ENCODE measurements at regions of chr10 and their contacts with region 1.

Region 1: GRCh38 chr10:22228943-22229801 is 11.4 kb upstream of the EBLN1 start:
- DNase-seq: peak; percentile 71 to 77
- ATAC-seq: peak; percentile 91 to 92
- H3K4me3 ChIP-seq: peak overlapping the region; percentile 72 to 92 (median 82)
- H3K27ac ChIP-seq: peak overlapping the region; percentile 83 to 95 (median 90)
- H3K4me1 ChIP-seq: peaks cover 3 to 7% of the 10 kb centered on the region in 2 donors
- H3K27me3 ChIP-seq: no peaks in the 10 kb centered on the region
- CTCF ChIP-seq: no peak
- POLR2A ChIP-seq: peak in 1 of 2 donors; percentile 14

Region 2: GRCh38 chr10:21533467-21534279 is 695.5 kb before region 1 on chr10 and contains the start of gene MLLT10:
- in situ Hi-C with region 1: no loop called
- intact Hi-C with region 1: loop called (anchors 1 kb)
- DNase-seq: peak; percentile 89 to 95
- ATAC-seq: peak; percentile 74 to 75
- H3K4me3 ChIP-seq: peak within 1 kb of the TSS; percentile 77 to 98 (median 88)
- H3K27ac ChIP-seq: peak within 1 kb of the TSS; percentile 90 to 100 (median 98)
- H3K4me1 ChIP-seq: peaks cover 25% of the 10 kb centered on the region in 2 donors
- H3K27me3 ChIP-seq: no peaks in the 10 kb centered on the region
- CTCF ChIP-seq: peak; percentile 33 to 54 (median 46)
- POLR2A ChIP-seq: peak; percentile 85 to 90
- total RNA-seq, gene MLLT10: 13.6 to 26.6 (median 21.6) TPM

Region 3: GRCh38 chr10:21934307-21934706 is 294.9 kb before region 1 on chr10:
- in situ Hi-C with region 1: no loop called
- intact Hi-C with region 1: no loop called
- DNase-seq: no peak
- ATAC-seq: no peak
- H3K4me3 ChIP-seq: no peak overlapping the region
- H3K27ac ChIP-seq: no peak overlapping the region
- H3K4me1 ChIP-seq: no peaks in the 10 kb centered on the region
- H3K27me3 ChIP-seq: no peaks in the 10 kb centered on the region
- CTCF ChIP-seq: no peak
- POLR2A ChIP-seq: no peak

Region 4: DNA sequence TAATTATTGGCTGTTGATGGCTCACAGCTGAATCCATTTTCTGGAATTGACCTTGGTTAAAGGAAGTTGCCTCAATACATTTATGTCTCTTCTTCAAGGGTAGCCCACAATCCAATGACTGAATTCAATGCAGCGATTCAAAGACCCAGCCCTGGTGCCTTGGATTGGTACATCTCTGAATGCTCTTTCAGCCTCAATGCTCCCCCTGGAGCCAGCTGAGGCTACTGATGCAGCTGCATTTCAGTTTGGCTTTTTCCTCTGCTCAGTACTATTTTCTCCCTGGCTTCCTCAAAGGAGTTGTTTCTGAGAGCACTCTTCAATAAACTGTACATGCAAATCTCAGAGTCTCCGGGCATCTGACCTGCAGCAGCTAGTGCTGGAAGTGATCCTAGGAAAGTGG is 10.7 kb before region 1 on chr10:
- in situ Hi-C with region 1: no loop called
- intact Hi-C with region 1: no loop called
- DNase-seq: no peak
- ATAC-seq: no peak
- H3K4me3 ChIP-seq: no peak overlapping the region
- H3K27ac ChIP-seq: no peak overlapping the region
- H3K4me1 ChIP-seq: no peaks in the 10 kb centered on the region
- H3K27me3 ChIP-seq: no peaks in the 10 kb centered on the region
- CTCF ChIP-seq: no peak
- POLR2A ChIP-seq: no peak

Region 5: DNA sequence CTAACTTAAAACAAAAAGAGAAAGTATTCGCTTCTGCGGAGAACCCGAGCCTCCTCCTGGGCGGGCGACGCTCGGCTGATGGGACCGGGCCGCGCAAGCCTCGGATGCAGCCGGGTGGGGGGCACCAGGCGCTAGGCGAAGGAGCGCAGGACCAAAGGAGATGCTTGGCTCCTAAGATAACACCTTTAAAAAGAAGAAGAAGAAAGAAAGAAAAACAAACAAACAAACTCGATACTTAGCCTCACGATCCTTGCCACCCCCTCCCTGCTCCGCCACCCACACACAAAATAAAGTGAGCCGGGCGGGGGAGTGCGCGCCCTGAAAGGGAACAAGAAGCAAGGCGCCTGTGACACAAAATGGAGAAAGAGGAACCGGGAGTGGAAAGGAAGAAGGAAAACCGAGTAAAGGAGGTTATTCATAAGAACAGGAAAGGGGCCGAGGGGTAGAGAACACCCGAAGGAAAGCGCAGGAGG is 22.6 kb after region 1 on chr10:
- in situ Hi-C with region 1: no loop called
- intact Hi-C with region 1: loop called (anchors 1 kb)
- DNase-seq: peak; percentile 16 to 35
- ATAC-seq: peak; percentile 68 to 74
- H3K4me3 ChIP-seq: peak overlapping the region; percentile 72 to 84 (median 80)
- H3K27ac ChIP-seq: peak overlapping the region; percentile 84 to 87 (median 86)
- H3K4me1 ChIP-seq: peaks cover 7 to 9% of the 10 kb centered on the region in 2 donors
- H3K27me3 ChIP-seq: no peaks in the 10 kb centered on the region
- CTCF ChIP-seq: no peak
- POLR2A ChIP-seq: no peak

Region 6: GRCh38 chr10:22340362-22341189 is 111.4 kb after region 1 on chr10:
- in situ Hi-C with region 1: no loop called
- intact Hi-C with region 1: loop called (anchors 5 kb)
- DNase-seq: peak in 1 of 2 donors; percentile 52
- ATAC-seq: peak; percentile 79 to 80
- H3K4me3 ChIP-seq: peak overlapping the region; percentile 73 to 85 (median 76)
- H3K27ac ChIP-seq: peak overlapping the region; percentile 84 to 89 (median 86)
- H3K4me1 ChIP-seq: peaks cover 13 to 25% of the 10 kb centered on the region in 2 donors
- H3K27me3 ChIP-seq: peaks cover 89 to 90% (median 90%) of the 10 kb centered on the region in 3 donors
- CTCF ChIP-seq: peak in 1 of 5 experiments; percentile 7
- POLR2A ChIP-seq: peak; percentile 41 to 46

Region 7: DNA sequence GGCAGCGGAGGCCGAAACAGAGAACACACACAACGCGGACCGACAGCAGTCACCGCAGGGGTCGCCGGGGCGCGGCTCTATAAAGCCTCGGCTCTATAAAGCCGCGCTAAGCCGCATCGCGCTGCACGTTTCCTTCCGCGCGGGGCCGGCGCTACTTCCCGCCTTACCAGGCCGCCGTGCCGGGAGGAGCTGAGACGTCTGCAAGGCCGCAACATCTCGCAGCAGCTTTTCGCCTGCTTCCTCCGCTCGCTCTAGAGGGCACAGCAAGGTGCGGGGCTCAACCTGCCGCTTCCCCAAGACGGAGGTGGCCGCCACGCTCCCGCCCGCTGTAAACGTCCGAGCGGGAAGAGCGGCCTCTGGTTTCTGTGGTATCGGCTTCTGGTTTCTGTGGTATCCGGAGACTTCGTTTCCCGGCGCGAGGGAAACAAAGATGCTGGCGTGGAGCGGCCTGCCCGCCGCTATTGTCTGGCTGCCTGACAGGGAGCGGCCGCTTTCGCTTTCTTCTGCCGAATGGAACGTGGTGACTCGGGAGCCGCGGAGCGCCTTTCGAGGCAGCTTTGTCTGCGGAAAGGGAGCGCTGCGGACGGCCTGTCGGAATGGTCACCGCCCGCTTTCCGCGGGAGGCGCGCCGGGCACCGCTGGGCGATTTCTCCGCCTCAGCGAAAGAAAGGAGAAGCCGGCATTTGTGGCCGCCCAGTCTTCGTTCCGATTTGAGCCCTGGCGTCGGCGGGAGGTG is 207.9 kb after region 1 on chr10:
- in situ Hi-C with region 1: loop called in 1 of 4 experiments (anchors 25 kb)
- intact Hi-C with region 1: loop called (anchors 2 kb)
- DNase-seq: peak; percentile 69 to 86
- ATAC-seq: peak; percentile 79 to 89
- H3K4me3 ChIP-seq: peak overlapping the region; percentile 70 to 95 (median 78)
- H3K27ac ChIP-seq: peak overlapping the region; percentile 86 to 95 (median 86)
- H3K4me1 ChIP-seq: peaks cover 12 to 19% of the 10 kb centered on the region in 2 donors
- H3K27me3 ChIP-seq: no peaks in the 10 kb centered on the region
- CTCF ChIP-seq: no peak
- POLR2A ChIP-seq: peak; percentile 71 to 76

Region 8: DNA sequence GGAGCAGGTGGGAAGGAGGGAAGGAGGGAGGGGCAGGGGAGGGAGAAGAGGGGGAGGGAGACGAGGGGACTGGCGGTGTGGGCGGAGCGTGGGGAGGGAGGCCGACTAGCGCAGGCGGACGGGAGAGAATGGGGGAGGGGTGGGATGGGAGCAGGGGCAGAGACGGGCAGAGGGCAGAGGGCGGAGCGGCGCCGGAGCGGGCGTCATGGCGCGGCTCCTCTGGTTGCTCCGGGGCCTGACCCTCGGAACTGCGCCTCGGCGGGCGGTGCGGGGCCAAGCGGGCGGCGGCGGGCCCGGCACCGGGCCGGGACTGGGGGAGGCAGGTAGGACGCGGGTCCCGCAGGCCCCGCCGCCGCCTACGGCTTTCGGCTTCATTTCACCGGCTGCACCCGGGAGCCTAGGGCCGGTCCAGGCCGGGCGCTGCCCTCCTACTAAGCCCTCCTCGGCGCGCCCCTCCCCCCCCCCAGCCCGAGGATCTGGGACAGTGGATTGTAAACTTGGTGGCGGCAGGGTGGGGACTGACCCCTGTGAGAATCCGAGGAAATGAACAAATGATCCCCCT is 866.3 kb after region 1 on chr10 and contains the start of gene MSRB2:
- in situ Hi-C with region 1: no loop called
- intact Hi-C with region 1: loop called (anchors 10 kb)
- DNase-seq: peak; percentile 92 to 96
- ATAC-seq: peak; percentile 95 to 96
- H3K4me3 ChIP-seq: peak within 1 kb of the TSS; percentile 76 to 89 (median 81)
- H3K27ac ChIP-seq: peak within 1 kb of the TSS; percentile 81 to 95 (median 92)
- H3K4me1 ChIP-seq: peaks cover 29 to 33% of the 10 kb centered on the region in 2 donors
- H3K27me3 ChIP-seq: no peaks in the 10 kb centered on the region
- CTCF ChIP-seq: no peak
- POLR2A ChIP-seq: peak; percentile 90 to 92
- total RNA-seq, gene MSRB2: 24.3 to 43.5 (median 29.4) TPM